ENCODE measurements at regions of chr2 and their contacts with region 1.

Region 1: DNA sequence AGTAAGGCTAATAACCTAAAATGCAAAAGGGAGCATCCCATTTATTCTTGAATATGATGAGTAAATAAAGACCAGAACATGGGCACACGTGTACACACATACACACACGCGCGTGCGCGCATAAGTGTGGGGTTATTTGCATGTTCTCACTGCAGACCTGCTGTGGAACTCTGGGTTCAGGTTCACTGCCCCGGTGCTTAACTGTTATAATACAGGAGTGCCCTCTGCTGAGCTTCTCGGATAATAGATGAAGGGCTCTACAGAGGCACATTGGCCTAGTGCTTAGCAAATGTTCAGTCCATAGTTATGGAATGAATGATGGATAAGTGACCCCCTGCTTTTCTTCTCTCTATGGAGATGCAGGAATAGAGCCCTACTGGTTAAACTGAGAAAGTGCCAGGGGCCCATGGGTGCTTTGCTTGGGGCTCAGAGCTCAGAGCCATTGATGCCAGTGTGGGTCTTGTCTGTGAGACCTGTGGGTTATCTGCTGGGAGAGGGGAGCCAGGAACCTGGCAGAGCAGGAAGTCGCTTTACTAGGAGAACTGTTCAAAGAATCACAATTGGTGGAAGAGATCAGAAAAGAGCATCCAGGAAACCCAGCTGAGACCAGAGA is 3.6 kb upstream of the ARL4C start:
- DNase-seq: peak; percentile 81
- H3K4me3 Mint-ChIP-seq: no peak overlapping the region
- H3K27ac Mint-ChIP-seq: peak overlapping the region; percentile 65
- H3K4me1 Mint-ChIP-seq: peaks cover 31% of the 10 kb centered on the region
- H3K27me3 Mint-ChIP-seq: peaks cover 12% of the 10 kb centered on the region

Region 2: GRCh38 chr2:233976690-233977294 is 523.7 kb before region 1 on chr2:
- CTCF ChIA-PET with region 1: interaction called, 6 read pairs
- POLR2A ChIA-PET with region 1: interaction called, 14 read pairs
- DNase-seq: peak; percentile 26
- H3K4me3 Mint-ChIP-seq: no peak overlapping the region
- H3K27ac Mint-ChIP-seq: no peak overlapping the region
- H3K4me1 Mint-ChIP-seq: peaks cover 35% of the 10 kb centered on the region
- H3K27me3 Mint-ChIP-seq: no peaks in the 10 kb centered on the region

Region 3: DNA sequence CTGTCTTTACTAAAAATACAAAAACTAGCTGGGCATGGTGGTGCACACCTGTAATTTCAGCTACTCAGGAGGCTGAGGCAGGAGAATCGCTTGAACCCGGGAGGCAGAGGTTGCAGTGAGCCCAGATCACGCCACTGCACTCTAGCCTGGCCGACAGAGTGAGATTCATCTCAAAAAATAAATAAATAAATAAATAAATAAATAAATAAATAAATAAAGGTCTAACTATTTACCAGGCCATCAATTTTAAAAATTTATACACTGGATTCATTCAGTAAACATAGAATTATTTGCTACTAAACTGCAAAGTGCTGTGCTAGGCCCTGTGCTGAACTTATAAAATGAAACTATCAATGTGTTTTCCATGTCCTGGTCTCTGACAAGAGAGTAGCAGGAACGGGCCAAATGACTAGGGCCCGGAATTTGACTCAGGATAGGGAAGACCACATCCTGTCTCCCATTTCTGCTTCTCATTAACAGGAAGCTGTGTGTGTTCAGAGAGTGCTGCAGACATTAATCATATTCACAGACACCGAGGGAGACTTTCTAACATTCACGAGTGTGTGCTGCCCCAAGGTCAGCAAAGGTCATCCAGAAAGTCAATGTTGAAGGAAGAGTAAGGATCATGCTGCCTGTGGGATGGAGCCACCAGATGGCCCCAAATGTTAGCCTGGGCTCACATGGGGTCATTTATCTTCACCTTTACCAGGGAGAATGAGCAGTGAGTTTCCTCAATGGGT is 354.2 kb before region 1 on chr2:
- CTCF ChIA-PET with region 1: interaction called, 3 read pairs
- POLR2A ChIA-PET with region 1: interaction called, 13 read pairs
- DNase-seq: no peak
- H3K4me3 Mint-ChIP-seq: no peak overlapping the region
- H3K27ac Mint-ChIP-seq: peak overlapping the region; percentile 59
- H3K4me1 Mint-ChIP-seq: peaks cover 34% of the 10 kb centered on the region
- H3K27me3 Mint-ChIP-seq: peaks cover 2% of the 10 kb centered on the region

Region 4: DNA sequence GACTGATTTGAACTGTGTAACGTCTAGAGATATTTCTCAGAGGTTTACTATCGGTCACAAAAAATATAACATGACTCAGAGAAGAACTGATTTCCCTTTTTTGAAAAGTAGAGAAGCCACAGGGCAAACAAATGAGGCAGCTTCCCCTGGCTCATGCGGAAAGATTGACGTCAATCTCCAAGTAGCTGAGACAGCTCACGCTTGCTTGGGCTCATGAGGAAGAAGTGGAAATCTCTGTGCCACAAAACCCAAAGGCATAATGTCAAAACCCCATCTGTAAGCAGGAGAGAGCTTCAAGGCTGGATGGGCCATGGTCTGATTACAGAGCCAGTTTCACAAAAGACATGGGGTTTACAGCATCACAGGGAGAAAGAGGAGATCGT is 191.7 kb before region 1 on chr2:
- CTCF ChIA-PET with region 1: interaction called, 6 read pairs
- POLR2A ChIA-PET with region 1: interaction called, 51 read pairs
- DNase-seq: peak; percentile 83
- H3K4me3 Mint-ChIP-seq: peak overlapping the region; percentile 29
- H3K27ac Mint-ChIP-seq: peak overlapping the region; percentile 97
- H3K4me1 Mint-ChIP-seq: peaks cover 64% of the 10 kb centered on the region
- H3K27me3 Mint-ChIP-seq: no peaks in the 10 kb centered on the region

Region 5: GRCh38 chr2:234446404-234447076 is 54.0 kb before region 1 on chr2:
- CTCF ChIA-PET with region 1: interaction called, 6 read pairs
- POLR2A ChIA-PET with region 1: interaction called, 390 read pairs
- DNase-seq: peak; percentile 93
- H3K4me3 Mint-ChIP-seq: peak overlapping the region; percentile 55
- H3K27ac Mint-ChIP-seq: peak overlapping the region; percentile 99
- H3K4me1 Mint-ChIP-seq: peaks cover 82% of the 10 kb centered on the region
- H3K27me3 Mint-ChIP-seq: no peaks in the 10 kb centered on the region

Region 6: DNA sequence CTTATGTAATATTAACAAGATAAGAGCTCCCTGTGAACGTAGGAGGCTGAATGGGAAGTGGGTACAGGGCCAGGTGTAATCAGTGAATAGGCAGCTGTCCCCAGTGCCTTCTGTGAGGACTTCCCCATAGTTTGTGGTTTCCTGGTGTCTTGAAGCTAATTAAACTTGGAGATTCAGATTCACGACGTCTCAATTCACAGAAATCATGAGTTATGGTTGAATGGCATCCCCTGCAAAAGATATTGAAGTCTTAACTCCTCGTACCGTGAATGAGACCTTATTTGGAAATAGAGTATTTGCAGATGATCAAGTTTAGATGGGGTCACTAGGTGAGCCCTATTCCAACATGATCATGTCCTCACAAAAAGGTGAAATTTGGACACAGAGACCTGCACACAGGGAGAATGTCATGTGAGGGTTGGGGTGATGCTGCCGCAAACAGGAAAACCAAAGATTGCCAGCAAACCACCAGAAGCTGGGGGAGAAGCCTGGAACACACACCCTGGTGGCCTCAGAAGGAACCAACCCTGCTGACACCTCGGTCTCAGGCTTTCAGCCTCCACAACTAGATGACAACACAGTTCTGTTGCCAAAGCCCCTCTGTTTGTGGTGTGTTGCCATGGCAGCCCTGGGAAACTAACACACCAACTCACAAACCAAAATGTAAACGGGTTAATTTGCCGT is 16.8 kb before region 1 on chr2:
- CTCF ChIA-PET with region 1: interaction called, 7 read pairs
- POLR2A ChIA-PET with region 1: interaction called, 51 read pairs
- DNase-seq: peak; percentile 90
- H3K4me3 Mint-ChIP-seq: peak overlapping the region; percentile 59
- H3K27ac Mint-ChIP-seq: peak overlapping the region; percentile 88
- H3K4me1 Mint-ChIP-seq: peaks cover 93% of the 10 kb centered on the region
- H3K27me3 Mint-ChIP-seq: no peaks in the 10 kb centered on the region

Region 7: GRCh38 chr2:234564699-234565098 is 64.2 kb after region 1 on chr2:
- CTCF ChIA-PET with region 1: no interaction called
- POLR2A ChIA-PET with region 1: no interaction called
- DNase-seq: no peak
- H3K4me3 Mint-ChIP-seq: no peak overlapping the region
- H3K27ac Mint-ChIP-seq: no peak overlapping the region
- H3K4me1 Mint-ChIP-seq: no peaks in the 10 kb centered on the region
- H3K27me3 Mint-ChIP-seq: peaks cover 12% of the 10 kb centered on the region